ENCODE measurements at regions of chr1 and their contacts with region 1.

Region 1: GRCh38 chr1:153990468-153991150 is at the start of gene RPS27:
- DNase-seq: peak; percentile 76 to 97 (median 92)
- ATAC-seq: peak; percentile 90
- H3K4me3 ChIP-seq: peak within 1 kb of the TSS; percentile 82
- H3K4me3 Mint-ChIP-seq: peak within 1 kb of the TSS; percentile 83 to 99 (median 96)
- H3K27ac ChIP-seq: peak within 1 kb of the TSS; percentile 99
- H3K27ac Mint-ChIP-seq: peak within 1 kb of the TSS; percentile 92 to 100 (median 99)
- H3K4me1 ChIP-seq: peaks cover 26 to 34% of the 10 kb centered on the region in 2 donors
- H3K4me1 Mint-ChIP-seq: peaks cover 32 to 62% (median 44%) of the 10 kb centered on the region in 7 donors
- H3K27me3 ChIP-seq: no peaks in the 10 kb centered on the region
- H3K27me3 Mint-ChIP-seq: peaks cover 2 to 8% (median 4%) of the 10 kb centered on the region in 5 donors
- total RNA-seq, gene RPS27: 2,313 to 8,530 (median 5,699) TPM

Region 2: DNA sequence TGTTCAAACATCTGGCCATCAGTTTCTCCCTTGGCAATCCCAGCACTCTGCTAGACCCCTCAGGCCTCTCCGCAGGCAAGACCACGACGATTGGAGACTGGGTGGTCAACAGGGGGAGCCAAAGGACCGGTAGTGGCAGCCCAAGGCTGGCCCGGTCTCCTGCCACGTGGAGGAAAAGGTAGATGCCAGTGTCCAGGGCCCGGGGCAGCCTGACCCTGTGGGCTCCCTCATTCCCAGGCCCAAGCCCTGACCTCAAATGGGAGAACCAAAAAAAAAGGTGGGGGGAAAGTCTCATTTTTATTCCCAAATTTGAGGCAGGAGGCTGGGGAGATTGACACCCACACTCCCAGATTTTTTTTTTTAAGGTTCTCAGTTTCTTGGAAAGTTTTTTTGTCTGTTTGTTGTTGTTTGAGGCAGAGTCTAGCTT is 479.6 kb before region 1 on chr1:
- CTCF ChIA-PET with region 1: no interaction called
- POLR2A ChIA-PET with region 1: no interaction called
- intact Hi-C with region 1: loop called (anchors 1 to 10 kb)
- DNase-seq: peak; percentile 47 to 82 (median 68)
- ATAC-seq: peak; percentile 92
- H3K4me3 ChIP-seq: no peak overlapping the region
- H3K4me3 Mint-ChIP-seq: no peak overlapping the region
- H3K27ac ChIP-seq: no peak overlapping the region
- H3K27ac Mint-ChIP-seq: peak overlapping the region in 1 of 9 donors; percentile 10
- H3K4me1 ChIP-seq: peaks cover 3 to 4% of the 10 kb centered on the region in 2 donors
- H3K4me1 Mint-ChIP-seq: peaks cover 0 to 21% (median 6%) of the 10 kb centered on the region in 7 donors
- H3K27me3 ChIP-seq: no peaks in the 10 kb centered on the region
- H3K27me3 Mint-ChIP-seq: no peaks in the 10 kb centered on the region

Region 3: GRCh38 chr1:153670859-153671627 is 319.6 kb before region 1 on chr1 and contains the start of gene ILF2:
- CTCF ChIA-PET with region 1: no interaction called
- POLR2A ChIA-PET with region 1: interaction called, 7 read pairs
- intact Hi-C with region 1: loop called (anchors 1 to 2 kb)
- DNase-seq: peak; percentile 85 to 100 (median 98)
- ATAC-seq: peak; percentile 93
- H3K4me3 ChIP-seq: peak within 1 kb of the TSS; percentile 94
- H3K4me3 Mint-ChIP-seq: no peak within 1 kb of the TSS
- H3K27ac ChIP-seq: peak within 1 kb of the TSS; percentile 93
- H3K27ac Mint-ChIP-seq: peak within 1 kb of the TSS in 2 of 9 donors; percentile 62 to 73
- H3K4me1 ChIP-seq: peaks cover 18 to 19% of the 10 kb centered on the region in 2 donors
- H3K4me1 Mint-ChIP-seq: peaks cover 11 to 28% (median 17%) of the 10 kb centered on the region in 7 donors
- H3K27me3 ChIP-seq: no peaks in the 10 kb centered on the region
- H3K27me3 Mint-ChIP-seq: peaks cover 0 to under 1% (median 0%) of the 10 kb centered on the region in 5 donors
- total RNA-seq, gene ILF2: 83.6 to 177 (median 113) TPM

Region 4: DNA sequence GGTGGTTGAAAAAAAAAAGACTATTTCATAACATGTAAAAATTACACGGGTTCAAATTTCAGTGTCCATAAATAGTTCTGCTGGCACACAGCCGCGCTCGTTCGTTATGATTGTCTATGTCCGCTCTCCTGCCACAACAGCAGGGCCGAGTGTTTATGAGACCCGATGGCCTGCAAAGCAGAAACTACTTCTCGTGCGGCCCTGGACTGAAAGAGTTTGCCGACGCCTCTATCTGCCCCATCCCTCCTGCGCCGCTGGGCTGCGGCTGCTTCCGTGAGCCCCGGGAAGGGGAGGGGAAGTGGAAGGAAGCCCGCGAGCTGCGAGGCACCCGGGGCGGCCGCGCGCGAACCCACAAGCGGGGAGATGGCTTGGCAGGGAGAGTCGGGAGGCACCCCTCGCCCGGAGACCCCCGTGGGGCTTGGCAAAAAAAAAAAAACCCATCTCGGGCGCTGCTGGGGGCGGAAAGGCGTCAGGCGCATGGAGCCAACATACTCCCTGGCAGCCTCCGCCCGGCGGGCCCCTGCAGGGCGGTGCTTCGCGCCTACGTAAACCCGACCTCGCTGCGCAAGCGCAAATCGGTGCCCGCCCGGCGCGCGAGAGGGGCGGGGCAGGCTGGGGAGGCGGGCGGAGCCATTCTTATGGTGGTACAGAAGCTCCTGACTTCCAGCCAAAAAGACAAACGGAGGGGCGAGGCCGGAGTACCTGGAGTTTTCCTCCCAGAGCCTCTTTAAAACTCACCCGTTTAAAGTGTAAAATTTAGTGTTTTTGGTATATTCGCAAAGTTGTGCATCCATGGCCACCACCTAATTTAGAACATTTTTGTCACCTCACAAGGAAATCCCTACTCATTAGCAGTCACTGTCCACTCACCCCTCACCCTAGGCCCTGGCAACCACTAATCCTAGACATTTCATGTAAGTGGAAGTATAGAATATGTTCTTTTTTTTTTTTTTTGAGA is 207.1 kb before region 1 on chr1:
- CTCF ChIA-PET with region 1: no interaction called
- POLR2A ChIA-PET with region 1: interaction called, 15 read pairs
- intact Hi-C with region 1: loop called (anchors 1 kb)
- DNase-seq: peak; percentile 86 to 95 (median 92)
- ATAC-seq: peak; percentile 99
- H3K4me3 ChIP-seq: peak overlapping the region; percentile 78
- H3K4me3 Mint-ChIP-seq: peak overlapping the region; percentile 80 to 97 (median 90)
- H3K27ac ChIP-seq: peak overlapping the region; percentile 96
- H3K27ac Mint-ChIP-seq: peak overlapping the region; percentile 92 to 99 (median 95)
- H3K4me1 ChIP-seq: peaks cover 0 to 10% of the 10 kb centered on the region in 2 donors
- H3K4me1 Mint-ChIP-seq: peaks cover 0 to 17% (median 9%) of the 10 kb centered on the region in 7 donors
- H3K27me3 ChIP-seq: no peaks in the 10 kb centered on the region
- H3K27me3 Mint-ChIP-seq: peaks cover 0 to 6% (median 4%) of the 10 kb centered on the region in 5 donors

Region 5: DNA sequence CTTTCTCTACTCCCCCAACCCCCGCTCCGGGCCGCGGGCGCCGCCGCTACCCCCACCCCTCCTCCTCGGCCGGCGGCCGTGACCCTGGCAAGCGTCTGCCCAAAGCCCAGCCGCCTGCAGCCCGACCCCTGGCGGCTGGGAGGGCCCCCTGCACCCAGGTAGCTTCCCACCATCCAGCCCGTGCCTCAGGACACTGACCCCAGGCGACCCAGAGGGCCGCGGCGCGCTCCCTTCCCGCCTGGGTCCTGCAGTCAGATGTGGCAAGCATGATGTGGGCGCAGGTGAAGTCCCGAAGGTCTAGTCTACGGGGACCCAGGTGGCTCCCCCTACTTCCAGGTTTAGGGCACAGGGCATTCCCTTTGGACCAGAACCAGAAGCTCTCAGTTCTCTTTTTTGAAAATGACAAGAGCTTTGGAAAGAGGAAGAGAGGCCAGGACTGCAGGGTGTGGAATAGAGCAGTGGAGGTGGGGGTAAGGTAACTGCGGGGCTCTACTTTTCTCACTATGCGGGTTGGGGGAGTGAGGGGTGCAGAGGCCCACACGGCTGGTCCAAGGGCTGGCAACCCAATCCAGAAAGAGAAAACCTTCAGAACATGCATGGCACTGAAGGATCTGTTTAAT is 43.9 kb before region 1 on chr1 and contains the start of gene DENND4B:
- CTCF ChIA-PET with region 1: interaction called, 13 read pairs
- POLR2A ChIA-PET with region 1: interaction called, 37 read pairs
- intact Hi-C with region 1: loop called (anchors 1 kb)
- DNase-seq: peak; percentile 55 to 85 (median 68)
- ATAC-seq: peak; percentile 75
- H3K4me3 ChIP-seq: peak within 1 kb of the TSS; percentile 94
- H3K4me3 Mint-ChIP-seq: peak within 1 kb of the TSS; percentile 93 to 99 (median 96)
- H3K27ac ChIP-seq: peak within 1 kb of the TSS; percentile 89
- H3K27ac Mint-ChIP-seq: peak within 1 kb of the TSS; percentile 90 to 98 (median 96)
- H3K4me1 ChIP-seq: peaks cover 23 to 25% of the 10 kb centered on the region in 2 donors
- H3K4me1 Mint-ChIP-seq: peaks cover 20 to 44% (median 39%) of the 10 kb centered on the region in 7 donors
- H3K27me3 ChIP-seq: no peaks in the 10 kb centered on the region
- H3K27me3 Mint-ChIP-seq: no peaks in the 10 kb centered on the region
- total RNA-seq, gene DENND4B: 148 to 223 (median 197) TPM

Region 6: DNA sequence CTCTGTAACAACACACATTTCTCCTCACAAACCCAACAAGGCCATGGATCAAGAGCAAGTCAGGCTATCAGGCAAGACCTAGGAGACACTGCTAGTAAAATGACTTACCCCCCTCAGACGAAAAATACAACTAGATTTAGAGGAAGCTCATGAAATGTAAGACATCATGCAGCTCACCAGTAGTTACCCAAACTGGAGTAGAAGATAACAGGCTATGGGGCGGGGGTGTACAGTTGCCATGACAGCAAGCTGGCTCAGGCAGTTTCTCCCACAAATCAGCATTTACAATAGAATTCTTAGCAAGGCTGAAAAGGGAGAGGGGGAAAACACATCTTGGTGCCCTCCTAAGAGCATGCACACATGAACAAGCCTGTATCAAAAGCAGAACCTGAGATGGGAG is 187.4 kb after region 1 on chr1:
- CTCF ChIA-PET with region 1: interaction called, 3 read pairs
- POLR2A ChIA-PET with region 1: interaction called, 44 read pairs
- intact Hi-C with region 1: loop called (anchors 1 kb)
- DNase-seq: peak in 1 of 9 donors; percentile 28
- ATAC-seq: no peak
- H3K4me3 ChIP-seq: no peak overlapping the region
- H3K4me3 Mint-ChIP-seq: peak overlapping the region; percentile 67 to 100 (median 98)
- H3K27ac ChIP-seq: peak overlapping the region; percentile 95
- H3K27ac Mint-ChIP-seq: peak overlapping the region; percentile 35 to 99 (median 92)
- H3K4me1 ChIP-seq: peaks cover 47 to 68% of the 10 kb centered on the region in 2 donors
- H3K4me1 Mint-ChIP-seq: peaks cover 61 to 78% (median 71%) of the 10 kb centered on the region in 7 donors
- H3K27me3 ChIP-seq: no peaks in the 10 kb centered on the region
- H3K27me3 Mint-ChIP-seq: peaks cover 0 to 2% (median 0%) of the 10 kb centered on the region in 5 donors

Region 7: DNA sequence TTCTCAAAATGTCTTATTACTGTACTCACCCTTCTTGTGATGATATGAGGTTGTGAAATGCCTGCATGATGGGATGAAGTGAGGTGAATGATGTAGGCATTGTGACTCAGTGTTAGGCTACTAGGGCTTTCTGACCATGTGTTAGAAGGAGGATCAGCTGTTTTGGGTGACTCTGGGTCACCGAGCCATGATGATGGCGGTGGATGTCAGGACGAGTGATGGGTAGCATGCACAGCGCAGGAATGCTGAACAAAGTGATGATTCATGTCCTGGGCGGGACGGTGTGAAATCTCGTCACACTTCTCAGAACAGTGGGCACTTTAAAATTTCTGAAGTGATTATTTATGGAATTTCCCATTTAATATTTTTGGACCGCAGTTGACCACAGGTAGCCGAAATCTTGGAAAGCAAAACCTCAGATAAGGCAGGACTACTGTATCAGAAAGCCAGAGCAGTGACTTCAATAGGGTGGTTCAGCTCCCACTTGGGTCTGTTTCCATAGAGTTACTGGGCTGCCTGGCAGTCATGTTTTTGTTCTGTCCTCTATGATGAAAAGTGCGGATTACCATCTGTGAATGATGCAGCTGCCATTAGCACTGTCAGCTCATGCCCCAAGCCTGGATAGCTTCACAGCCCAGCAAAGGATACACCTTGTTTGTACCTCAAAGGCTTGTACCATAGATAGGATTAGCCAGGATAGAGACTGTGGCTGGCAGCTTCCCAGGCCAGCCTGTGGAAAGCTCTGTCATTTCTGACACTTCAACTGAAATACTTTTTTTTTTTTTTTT is 441.2 kb after region 1 on chr1:
- CTCF ChIA-PET with region 1: no interaction called
- POLR2A ChIA-PET with region 1: no interaction called
- intact Hi-C with region 1: no loop called
- DNase-seq: no peak
- ATAC-seq: peak; percentile 87
- H3K4me3 ChIP-seq: no peak overlapping the region
- H3K4me3 Mint-ChIP-seq: peak overlapping the region in 7 of 10 donors; percentile 3 to 44 (median 12)
- H3K27ac ChIP-seq: no peak overlapping the region
- H3K27ac Mint-ChIP-seq: peak overlapping the region; percentile 26 to 93 (median 84)
- H3K4me1 ChIP-seq: peaks cover 10 to 25% of the 10 kb centered on the region in 2 donors
- H3K4me1 Mint-ChIP-seq: peaks cover 26 to 67% (median 49%) of the 10 kb centered on the region in 7 donors
- H3K27me3 ChIP-seq: no peaks in the 10 kb centered on the region
- H3K27me3 Mint-ChIP-seq: no peaks in the 10 kb centered on the region

Measured in naive thymus-derived CD4-positive, alpha-beta T cell (primary cell).